Activated T-helper 2 cell treated with anti-CD3 and anti-CD28 coated beads, Interferon-gamma antibody, Interleukin-2, Interleukin-4, amounts not matched to agents 10 μg/mL and 5 μg/mL and 100 μg/mL, durations not matched to agents 14 hours and 24 hours and 36 hours (primary cell): ENCODE measurements at regions of chr9 and their contacts with region 1.

Region 1: GRCh38 chr9:12350775-12351174 is 342.4 kb upstream of the TYRP1 start:
- DNase-seq: no peak
- H3K4me3 Mint-ChIP-seq: no peak overlapping the region
- H3K27ac Mint-ChIP-seq: no peak overlapping the region
- H3K4me1 Mint-ChIP-seq: no peaks in the 10 kb centered on the region
- H3K27me3 Mint-ChIP-seq: no peaks in the 10 kb centered on the region

Region 2: GRCh38 chr9:12363439-12363838 is 12.7 kb after region 1 on chr9:
- intact Hi-C with region 1: loop called (anchors 1 kb)
- DNase-seq: no peak
- H3K4me3 Mint-ChIP-seq: no peak overlapping the region
- H3K27ac Mint-ChIP-seq: no peak overlapping the region
- H3K4me1 Mint-ChIP-seq: no peaks in the 10 kb centered on the region
- H3K27me3 Mint-ChIP-seq: no peaks in the 10 kb centered on the region

Region 3: DNA sequence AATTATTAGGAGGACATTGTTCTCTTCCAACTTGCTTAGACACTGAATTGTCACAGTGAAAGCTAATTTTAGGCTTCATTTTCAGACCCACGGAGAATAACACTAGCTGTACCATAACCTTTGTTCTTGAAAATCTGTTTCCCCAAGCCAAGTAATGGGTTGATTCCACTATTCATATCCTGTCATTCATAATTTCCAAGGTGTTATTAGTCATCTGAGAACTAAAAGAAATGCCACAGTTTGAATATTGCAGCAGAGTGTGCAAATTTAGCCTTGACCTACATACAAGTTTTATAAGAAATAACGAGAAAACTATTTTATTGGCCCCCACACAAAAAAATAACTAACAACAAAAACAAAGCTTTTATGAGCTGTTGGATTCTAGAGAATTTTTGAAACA is 193.9 kb after region 1 on chr9:
- intact Hi-C with region 1: no loop called
- DNase-seq: no peak
- H3K4me3 Mint-ChIP-seq: no peak overlapping the region
- H3K27ac Mint-ChIP-seq: no peak overlapping the region
- H3K4me1 Mint-ChIP-seq: no peaks in the 10 kb centered on the region
- H3K27me3 Mint-ChIP-seq: no peaks in the 10 kb centered on the region